ENCODE measurements at regions of chr10 and their contacts with region 1.

Region 1: DNA sequence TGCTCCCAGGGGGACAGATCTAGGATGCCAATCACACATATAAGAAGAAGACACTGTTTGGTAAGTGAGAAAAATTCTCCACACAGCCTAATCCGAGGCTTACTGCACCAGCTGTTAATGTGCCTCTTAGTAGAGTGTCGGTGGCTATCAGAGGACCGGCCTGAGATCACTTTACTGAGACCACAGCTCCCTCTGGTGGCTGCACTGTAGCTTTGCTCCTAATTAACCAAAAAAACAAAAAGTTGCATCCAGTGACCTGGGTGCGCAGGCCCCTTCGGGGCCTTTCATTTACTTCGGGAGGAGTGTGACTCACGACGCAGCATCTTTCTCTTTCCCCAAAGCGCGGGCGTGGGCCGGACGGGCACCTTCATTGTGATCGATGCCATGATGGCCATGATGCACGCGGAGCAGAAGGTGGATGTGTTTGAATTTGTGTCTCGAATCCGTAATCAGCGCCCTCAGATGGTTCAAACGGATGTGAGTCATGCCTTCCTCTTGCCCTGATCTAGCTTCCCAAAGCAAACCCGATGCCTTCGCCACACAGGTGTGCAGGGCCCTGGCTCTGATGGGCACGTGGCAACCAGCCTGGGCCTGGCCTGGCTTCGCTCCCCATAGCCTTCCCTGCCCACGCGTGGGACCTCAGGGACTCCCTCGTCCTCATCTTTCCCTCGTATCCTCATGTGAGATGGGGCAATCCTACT is 56.7 kb downstream of the MKI67 start:
- DNase-seq: peak; percentile 42
- ATAC-seq: peak; percentile 86
- H3K4me3 ChIP-seq: no peak overlapping the region
- H3K27ac ChIP-seq: no peak overlapping the region
- H3K4me1 ChIP-seq: no peaks in the 10 kb centered on the region
- H3K27me3 ChIP-seq: peaks cover 8 to 53% of the 10 kb centered on the region in 2 experiments; a peak in 3 of 5 replicates
- CTCF ChIP-seq: peak; percentile 79
- EP300 ChIP-seq: no peak
- POLR2A ChIP-seq: no peak
- RAD21 ChIP-seq: 0 out of 2 replicates have a peak, but pooled peaks have one; percentile 28

Region 2: DNA sequence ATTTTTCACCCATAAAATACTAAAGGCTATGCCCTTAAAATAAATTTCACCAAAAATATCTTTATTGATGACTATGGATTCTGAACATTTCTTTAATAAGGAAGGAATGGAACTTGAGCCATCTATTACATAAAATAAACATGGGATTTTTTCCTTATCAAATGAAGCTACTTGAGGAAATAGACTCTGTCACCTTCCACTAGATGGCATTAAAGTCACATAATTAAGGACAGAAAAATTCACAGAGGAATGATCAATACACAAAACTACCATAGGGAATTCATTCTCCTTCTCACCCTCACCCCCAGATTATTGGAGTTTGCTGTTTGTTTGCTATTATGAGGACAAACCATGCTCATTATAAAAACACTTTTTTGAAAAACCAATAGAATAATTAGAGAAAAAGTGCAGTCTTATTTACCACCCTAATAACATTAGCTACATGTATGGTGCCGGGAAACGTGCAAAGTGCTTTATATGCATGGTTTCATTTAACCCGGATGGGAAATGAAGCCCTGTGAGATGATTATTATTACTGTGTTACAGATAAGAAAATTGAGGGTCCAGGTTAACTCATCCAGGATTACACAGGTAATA is 353.6 kb before region 1 on chr10:
- CTCF ChIA-PET with region 1: no interaction called
- POLR2A ChIA-PET with region 1: no interaction called
- in situ Hi-C with region 1: loop called (anchors 10 kb)
- intact Hi-C with region 1: loop called (anchors 5 kb)
- DNase-seq: peak; percentile 39
- ATAC-seq: no peak
- H3K4me3 ChIP-seq: no peak overlapping the region
- H3K27ac ChIP-seq: no peak overlapping the region
- H3K4me1 ChIP-seq: no peaks in the 10 kb centered on the region
- H3K27me3 ChIP-seq: peaks cover 0 to 3% of the 10 kb centered on the region in 2 experiments; a peak in 2 of 5 replicates
- CTCF ChIP-seq: peak; percentile 48
- EP300 ChIP-seq: no peak
- POLR2A ChIP-seq: no peak
- RAD21 ChIP-seq: no peak

Region 3: DNA sequence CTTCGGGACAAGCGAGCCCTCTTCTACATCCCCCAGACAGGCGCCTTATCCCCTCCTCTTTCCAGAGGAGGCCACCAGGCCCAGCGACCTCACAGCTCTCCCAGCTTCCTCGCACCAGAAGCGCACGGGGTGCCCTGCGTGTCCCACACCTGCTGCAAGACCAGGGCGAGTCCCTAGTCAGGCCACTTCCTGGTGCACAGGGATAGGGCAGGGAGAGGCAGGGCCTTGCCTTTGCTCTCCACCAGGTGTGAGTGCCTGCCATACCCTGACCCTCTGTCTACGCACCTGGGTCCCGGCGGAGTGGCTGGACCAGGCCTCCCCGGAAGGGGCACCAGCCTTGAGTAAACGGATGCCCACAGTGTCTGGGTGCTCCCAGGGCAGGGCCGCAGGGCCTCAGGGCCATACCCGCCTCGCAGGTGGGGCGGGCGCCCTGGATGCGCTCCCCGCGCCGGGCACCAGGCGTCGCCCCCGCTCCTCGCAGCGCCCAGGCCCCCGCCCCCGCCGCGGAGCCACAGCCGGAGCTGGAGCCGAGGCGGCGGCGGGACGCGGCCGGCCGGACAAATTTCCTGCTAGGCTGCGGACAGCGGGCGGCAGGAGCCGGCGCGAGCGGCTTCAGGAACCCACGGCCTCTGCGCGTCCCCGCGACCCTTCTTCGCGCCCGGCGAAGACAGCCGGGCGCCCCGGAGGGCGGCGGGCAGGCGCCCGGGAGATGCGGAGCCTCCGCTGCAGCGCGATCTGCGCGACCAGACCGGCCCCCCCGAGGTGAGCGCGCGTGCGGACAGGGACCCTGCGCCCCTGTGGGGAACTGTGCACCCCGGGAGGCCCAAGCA is 162.7 kb before region 1 on chr10 and contains the start of gene PTPRE:
- CTCF ChIA-PET with region 1: interaction called, 7 read pairs
- POLR2A ChIA-PET with region 1: no interaction called
- in situ Hi-C with region 1: loop called (anchors 5 kb)
- intact Hi-C with region 1: loop called (anchors 1 kb)
- DNase-seq: no peak
- ATAC-seq: peak; percentile 98
- H3K4me3 ChIP-seq: peak within 1 kb of the TSS; percentile 40 to 63 (median 42); a peak in 5 of 6 replicates
- H3K27ac ChIP-seq: no peak within 1 kb of the TSS
- H3K4me1 ChIP-seq: no peaks in the 10 kb centered on the region
- H3K27me3 ChIP-seq: peaks cover 1 to 53% of the 10 kb centered on the region in 2 experiments; a peak in 3 of 5 replicates
- CTCF ChIP-seq: peak; percentile 60
- EP300 ChIP-seq: no peak
- POLR2A ChIP-seq: no peak
- RAD21 ChIP-seq: peak; percentile 88
- total RNA-seq, gene PTPRE: 0.02 TPM in 1 of 2 replicates, not detected in the other

Region 4: DNA sequence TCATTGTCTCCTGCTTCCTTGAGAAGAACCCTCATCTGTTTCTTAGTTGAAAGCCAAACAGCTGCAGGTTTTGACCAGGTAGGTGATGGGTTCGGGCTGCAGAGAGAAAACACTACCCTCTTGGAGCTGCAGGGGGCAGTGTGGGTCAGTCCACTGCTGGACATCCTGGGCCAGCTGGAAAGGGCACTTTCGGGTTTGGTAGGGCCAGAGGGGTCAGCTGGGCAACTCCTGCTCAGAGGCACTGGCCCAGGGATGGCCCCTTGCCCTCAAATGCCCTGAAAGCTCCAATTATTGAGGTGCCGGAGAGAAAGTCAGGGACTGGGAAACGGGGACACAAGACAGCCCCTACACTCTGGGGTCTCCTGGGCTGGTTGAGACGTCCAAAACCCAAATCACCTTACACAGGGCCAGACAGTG is 33.9 kb before region 1 on chr10:
- CTCF ChIA-PET with region 1: interaction called, 4 read pairs
- POLR2A ChIA-PET with region 1: no interaction called
- in situ Hi-C with region 1: no loop called
- intact Hi-C with region 1: loop called (anchors 1 kb)
- DNase-seq: no peak
- ATAC-seq: peak; percentile 81
- H3K4me3 ChIP-seq: no peak overlapping the region
- H3K27ac ChIP-seq: no peak overlapping the region
- H3K4me1 ChIP-seq: no peaks in the 10 kb centered on the region
- H3K27me3 ChIP-seq: peaks cover 0 to 18% of the 10 kb centered on the region in 2 experiments; a peak in 1 of 5 replicates
- CTCF ChIP-seq: peak; percentile 76
- EP300 ChIP-seq: no peak
- POLR2A ChIP-seq: no peak
- RAD21 ChIP-seq: 0 out of 2 replicates have a peak, but pooled peaks have one; percentile 19

Region 5: DNA sequence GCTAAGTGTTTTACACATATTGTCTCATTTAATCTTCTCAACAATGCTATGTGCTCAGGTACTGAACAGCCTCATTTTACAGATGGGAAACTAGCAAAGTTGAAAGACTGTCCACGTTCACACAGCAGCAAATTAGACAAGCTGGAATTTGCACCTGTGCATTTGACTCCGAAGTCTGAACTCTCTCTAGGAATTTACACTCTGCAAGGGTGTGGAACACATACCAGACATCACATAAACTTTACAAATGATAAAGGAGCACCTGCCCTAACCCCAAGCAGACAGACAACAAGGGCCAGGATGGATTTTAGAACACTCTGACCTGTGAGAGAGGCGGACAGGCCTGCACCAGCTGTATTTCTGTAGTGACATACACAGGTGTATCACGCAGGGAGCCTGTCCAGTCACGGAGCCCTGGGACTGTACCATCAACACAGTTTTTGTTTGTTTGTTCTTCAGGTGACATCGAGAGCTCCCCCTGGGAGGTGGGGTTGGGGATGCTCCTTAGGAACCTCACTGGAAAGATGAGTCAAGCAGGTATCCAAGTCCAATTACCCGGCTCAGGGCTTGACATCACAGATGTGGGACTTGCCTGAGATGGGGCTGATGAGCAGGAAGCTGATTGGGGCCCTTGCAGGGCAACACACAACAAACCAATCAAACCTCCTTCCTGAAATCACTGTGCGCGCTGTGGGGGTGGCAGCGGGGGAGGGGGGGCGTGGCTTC is 25.7 kb after region 1 on chr10:
- CTCF ChIA-PET with region 1: no interaction called
- POLR2A ChIA-PET with region 1: no interaction called
- in situ Hi-C with region 1: no loop called
- intact Hi-C with region 1: no loop called
- DNase-seq: no peak
- ATAC-seq: peak; percentile 19
- H3K4me3 ChIP-seq: no peak overlapping the region
- H3K27ac ChIP-seq: no peak overlapping the region
- H3K4me1 ChIP-seq: no peaks in the 10 kb centered on the region
- H3K27me3 ChIP-seq: peaks cover 0 to 3% of the 10 kb centered on the region in 2 experiments; a peak in 2 of 5 replicates
- CTCF ChIP-seq: no peak
- EP300 ChIP-seq: no peak
- POLR2A ChIP-seq: no peak
- RAD21 ChIP-seq: no peak

Region 6: GRCh38 chr10:128105383-128105782 is 35.9 kb after region 1 on chr10:
- CTCF ChIA-PET with region 1: no interaction called
- POLR2A ChIA-PET with region 1: no interaction called
- in situ Hi-C with region 1: no loop called
- intact Hi-C with region 1: no loop called
- DNase-seq: no peak
- ATAC-seq: no peak
- H3K4me3 ChIP-seq: no peak overlapping the region
- H3K27ac ChIP-seq: no peak overlapping the region
- H3K4me1 ChIP-seq: no peaks in the 10 kb centered on the region
- H3K27me3 ChIP-seq: no peaks in the 10 kb centered on the region
- CTCF ChIP-seq: no peak
- EP300 ChIP-seq: no peak
- POLR2A ChIP-seq: no peak
- RAD21 ChIP-seq: no peak

Measured in HepG2 (cell line).